ENCODE measurements at regions of chr2 and their contacts with region 1.

Region 1: GRCh38 chr2:209334198-209335017 is 89.4 kb upstream of the MAP2 start:
- DNase-seq: peak; percentile 29
- CTCF ChIP-seq: peak; percentile 70

Region 2: GRCh38 chr2:209322041-209322440 is 12.4 kb before region 1 on chr2:
- CTCF ChIA-PET with region 1: interaction called, 73 read pairs
- POLR2A ChIA-PET with region 1: no interaction called
- DNase-seq: no peak
- CTCF ChIP-seq: no peak

Region 3: GRCh38 chr2:209423562-209424198 is 89.3 kb after region 1 on chr2 and contains the start of gene MAP2:
- CTCF ChIA-PET with region 1: interaction called, 28 read pairs
- POLR2A ChIA-PET with region 1: no interaction called
- DNase-seq: peak; percentile 88
- CTCF ChIP-seq: peak; percentile 88

Region 4: GRCh38 chr2:209577376-209578357 is 243.3 kb after region 1 on chr2:
- CTCF ChIA-PET with region 1: interaction called, 70 read pairs
- POLR2A ChIA-PET with region 1: no interaction called
- DNase-seq: peak; percentile 16
- CTCF ChIP-seq: peak; percentile 26